Posterior vena cava (tissue), 2 donors: ENCODE measurements at regions of chr10 and their contacts with region 1.

Region 1: GRCh38 chr10:69392481-69393000 is 24.2 kb downstream of the TACR2 start:
- DNase-seq: peak; percentile 95

Region 2: GRCh38 chr10:68784476-68784875 is 608.1 kb before region 1 on chr10:
- intact Hi-C with region 1: no loop called
- DNase-seq: no peak

Region 3: GRCh38 chr10:69237528-69238159 is 154.9 kb before region 1 on chr10:
- intact Hi-C with region 1: loop called (anchors 2 kb)
- DNase-seq: peak; percentile 97

Region 4: DNA sequence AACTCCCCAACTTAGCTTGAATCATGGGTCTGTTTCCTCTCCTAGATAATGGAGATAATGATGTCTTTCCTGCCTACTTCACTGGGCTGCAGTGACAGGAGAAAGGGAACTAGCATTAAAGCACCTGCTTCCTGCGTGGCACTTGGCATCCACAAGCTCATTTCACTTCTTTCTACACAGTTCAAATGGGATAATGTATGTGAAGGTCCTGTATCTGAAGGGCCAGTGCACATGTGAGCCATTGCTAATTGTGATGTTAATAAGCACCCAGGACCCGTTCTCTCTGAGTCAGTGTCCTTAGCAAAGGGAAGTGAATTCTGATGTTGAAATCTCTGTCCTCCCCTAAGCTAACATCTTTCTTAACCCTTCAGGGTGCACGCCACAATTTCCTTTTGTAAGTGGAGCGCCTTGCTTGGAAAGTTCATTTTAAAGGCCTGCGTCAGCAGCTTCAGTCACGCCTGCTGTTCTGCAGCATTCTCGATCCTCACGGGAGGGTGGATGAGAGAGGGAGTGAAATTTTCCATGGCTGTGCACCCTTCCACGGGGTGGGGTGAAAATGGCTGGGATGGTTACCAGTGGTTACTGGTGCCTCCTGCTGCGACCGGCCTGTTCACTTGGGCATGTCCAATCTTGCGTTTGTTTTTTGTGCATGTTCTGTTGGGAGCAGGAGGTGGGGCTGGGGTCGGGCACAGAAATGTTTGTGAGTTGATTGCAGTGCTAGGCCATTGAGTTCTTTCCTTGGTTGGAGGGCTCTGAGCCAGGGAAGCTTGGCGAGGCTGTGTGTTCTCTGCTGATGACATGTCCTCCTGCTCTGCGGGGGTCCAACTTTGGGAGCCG is 55.0 kb before region 1 on chr10:
- intact Hi-C with region 1: loop called in 1 of 2 experiments (anchors 10 kb)
- DNase-seq: peak; percentile 73